ENCODE measurements at regions of chr9 and their contacts with region 1.

Region 1: GRCh38 chr9:111411266-111411665 is 72.9 kb downstream of the ECPAS start:
- DNase-seq: no peak
- H3K4me3 ChIP-seq: no peak overlapping the region
- H3K27ac ChIP-seq: no peak overlapping the region
- H3K4me1 ChIP-seq: no peaks in the 10 kb centered on the region
- CTCF ChIP-seq: no peak

Region 2: GRCh38 chr9:111386386-111386785 is 24.9 kb before region 1 on chr9:
- CTCF ChIA-PET with region 1: no interaction called
- POLR2A ChIA-PET with region 1: no interaction called
- intact Hi-C with region 1: no loop called
- DNase-seq: no peak
- H3K4me3 ChIP-seq: no peak overlapping the region
- H3K27ac ChIP-seq: no peak overlapping the region
- H3K4me1 ChIP-seq: no peaks in the 10 kb centered on the region
- CTCF ChIP-seq: no peak

Region 3: DNA sequence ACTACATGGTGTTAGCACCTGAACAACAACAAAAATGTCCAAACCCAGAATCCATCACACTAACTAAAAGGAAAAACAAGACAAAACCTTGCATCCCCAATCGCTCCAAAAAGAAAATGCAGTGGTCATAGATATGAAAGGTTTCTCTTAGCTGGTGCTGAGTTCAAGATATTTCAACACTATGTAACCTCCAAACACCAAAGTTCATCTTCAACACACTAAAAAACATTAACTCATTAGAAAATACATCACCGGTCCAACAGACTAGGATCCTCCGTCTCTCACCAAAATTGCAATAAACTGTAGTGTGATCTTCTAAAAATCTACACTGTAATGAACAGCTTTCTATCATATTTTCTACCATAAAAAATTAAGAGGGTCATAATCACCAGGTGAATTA is 12.1 kb after region 1 on chr9:
- CTCF ChIA-PET with region 1: no interaction called
- POLR2A ChIA-PET with region 1: interaction called, 12 read pairs
- intact Hi-C with region 1: no loop called
- DNase-seq: no peak
- H3K4me3 ChIP-seq: no peak overlapping the region
- H3K27ac ChIP-seq: no peak overlapping the region
- H3K4me1 ChIP-seq: no peaks in the 10 kb centered on the region
- CTCF ChIP-seq: no peak

Measured in OCI-LY7 (cell line).